CD4-positive, alpha-beta T cell (primary cell): ENCODE measurements at regions of chr19 and their contacts with region 1.

Region 1: GRCh38 chr19:29941828-29942403 is at the start of gene URI1:
- DNase-seq: peak; percentile 81 to 98 (median 93)
- ATAC-seq: peak; percentile 89
- H3K4me3 ChIP-seq: peak within 1 kb of the TSS; percentile 82
- H3K4me3 Mint-ChIP-seq: peak within 1 kb of the TSS; percentile 98
- H3K27ac ChIP-seq: peak within 1 kb of the TSS; percentile 12 to 67
- H3K27ac Mint-ChIP-seq: peak within 1 kb of the TSS; percentile 96
- H3K4me1 ChIP-seq: peaks cover 27% of the 10 kb centered on the region
- H3K4me1 Mint-ChIP-seq: peaks cover 53% of the 10 kb centered on the region
- H3K27me3 ChIP-seq: no peaks in the 10 kb centered on the region
- H3K27me3 Mint-ChIP-seq: no peaks in the 10 kb centered on the region
- CTCF ChIP-seq: no peak
- total RNA-seq, gene URI1: 50.9 to 63.6 TPM

Region 2: GRCh38 chr19:29212648-29213573 is 729.0 kb before region 1 on chr19 and contains the start of gene UQCRFS1:
- CTCF ChIA-PET with region 1: no interaction called
- POLR2A ChIA-PET with region 1: no interaction called
- intact Hi-C with region 1: loop called (anchors 5 to 10 kb)
- DNase-seq: peak; percentile 91 to 97 (median 94)
- ATAC-seq: peak; percentile 96
- H3K4me3 ChIP-seq: peak within 1 kb of the TSS; percentile 74
- H3K4me3 Mint-ChIP-seq: peak within 1 kb of the TSS; percentile 99
- H3K27ac ChIP-seq: peak within 1 kb of the TSS; percentile 67 to 78
- H3K27ac Mint-ChIP-seq: peak within 1 kb of the TSS; percentile 96
- H3K4me1 ChIP-seq: peaks cover 10% of the 10 kb centered on the region
- H3K4me1 Mint-ChIP-seq: peaks cover 54% of the 10 kb centered on the region
- H3K27me3 ChIP-seq: no peaks in the 10 kb centered on the region
- H3K27me3 Mint-ChIP-seq: peaks cover 14% of the 10 kb centered on the region
- CTCF ChIP-seq: no peak
- total RNA-seq, gene UQCRFS1: 30.5 TPM

Region 3: DNA sequence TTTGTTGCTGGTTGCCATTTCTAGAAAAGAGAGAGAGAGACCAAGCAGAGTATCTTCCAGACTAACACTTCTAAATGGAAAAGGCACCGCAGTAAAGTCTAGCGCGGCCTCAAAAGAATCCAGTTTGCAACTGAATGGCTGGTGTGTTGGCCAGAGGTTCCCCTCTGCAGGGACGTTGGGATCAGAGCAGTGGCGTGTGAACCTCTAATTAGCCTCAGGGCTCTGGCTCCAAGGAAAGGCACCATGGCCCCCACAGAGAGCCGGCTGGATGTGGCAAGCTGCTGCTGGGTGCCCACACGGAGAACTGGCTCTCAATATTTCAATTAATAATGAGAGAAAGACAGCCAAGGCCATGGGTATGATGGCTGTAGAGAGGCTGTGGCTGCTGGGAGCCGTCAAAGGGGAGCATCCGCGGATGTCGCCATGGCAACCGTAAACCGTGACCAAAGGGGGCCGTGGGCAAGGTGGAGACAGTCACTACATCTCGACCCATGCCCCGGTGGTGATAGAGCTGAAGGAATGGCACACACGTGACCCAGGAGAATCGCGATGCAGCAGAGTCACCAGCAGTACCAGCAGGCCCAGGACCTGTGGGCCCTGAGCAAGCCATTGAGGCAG is 406.6 kb before region 1 on chr19:
- CTCF ChIA-PET with region 1: no interaction called
- POLR2A ChIA-PET with region 1: no interaction called
- intact Hi-C with region 1: no loop called
- DNase-seq: no peak
- ATAC-seq: no peak
- H3K4me3 ChIP-seq: no peak overlapping the region
- H3K4me3 Mint-ChIP-seq: no peak overlapping the region
- H3K27ac ChIP-seq: no peak overlapping the region
- H3K27ac Mint-ChIP-seq: no peak overlapping the region
- H3K4me1 ChIP-seq: no peaks in the 10 kb centered on the region
- H3K4me1 Mint-ChIP-seq: no peaks in the 10 kb centered on the region
- H3K27me3 ChIP-seq: peaks cover 28 to 33% of the 10 kb centered on the region in 2 experiments
- H3K27me3 Mint-ChIP-seq: peaks cover 67% of the 10 kb centered on the region
- CTCF ChIP-seq: no peak

Region 4: GRCh38 chr19:29671393-29672160 is 270.3 kb before region 1 on chr19:
- CTCF ChIA-PET with region 1: no interaction called
- POLR2A ChIA-PET with region 1: interaction called, 12 read pairs
- intact Hi-C with region 1: no loop called
- DNase-seq: peak; percentile 73 to 94 (median 89)
- ATAC-seq: peak; percentile 63
- H3K4me3 ChIP-seq: peak overlapping the region; percentile 30
- H3K4me3 Mint-ChIP-seq: peak overlapping the region; percentile 68
- H3K27ac ChIP-seq: peak overlapping the region; percentile 78 to 86
- H3K27ac Mint-ChIP-seq: peak overlapping the region; percentile 98
- H3K4me1 ChIP-seq: peaks cover 98% of the 10 kb centered on the region
- H3K4me1 Mint-ChIP-seq: peaks cover 88% of the 10 kb centered on the region
- H3K27me3 ChIP-seq: no peaks in the 10 kb centered on the region
- H3K27me3 Mint-ChIP-seq: no peaks in the 10 kb centered on the region
- CTCF ChIP-seq: peak; percentile 56

Region 5: GRCh38 chr19:29811125-29812079 is 130.5 kb before region 1 on chr19 and contains the start of gene CCNE1:
- CTCF ChIA-PET with region 1: no interaction called
- POLR2A ChIA-PET with region 1: no interaction called
- intact Hi-C with region 1: loop called in 1 of 2 experiments (anchors 2 kb)
- DNase-seq: peak; percentile 88 to 100 (median 94)
- ATAC-seq: peak; percentile 90
- H3K4me3 ChIP-seq: peak within 1 kb of the TSS; percentile 58
- H3K4me3 Mint-ChIP-seq: peak within 1 kb of the TSS; percentile 96
- H3K27ac ChIP-seq: peak within 1 kb of the TSS; percentile 50 to 55
- H3K27ac Mint-ChIP-seq: peak within 1 kb of the TSS; percentile 82
- H3K4me1 ChIP-seq: peaks cover 14% of the 10 kb centered on the region
- H3K4me1 Mint-ChIP-seq: peaks cover 11% of the 10 kb centered on the region
- H3K27me3 ChIP-seq: no peaks in the 10 kb centered on the region
- H3K27me3 Mint-ChIP-seq: no peaks in the 10 kb centered on the region
- CTCF ChIP-seq: no peak
- total RNA-seq, gene CCNE1: 4.9 to 5.6 TPM

Region 6: DNA sequence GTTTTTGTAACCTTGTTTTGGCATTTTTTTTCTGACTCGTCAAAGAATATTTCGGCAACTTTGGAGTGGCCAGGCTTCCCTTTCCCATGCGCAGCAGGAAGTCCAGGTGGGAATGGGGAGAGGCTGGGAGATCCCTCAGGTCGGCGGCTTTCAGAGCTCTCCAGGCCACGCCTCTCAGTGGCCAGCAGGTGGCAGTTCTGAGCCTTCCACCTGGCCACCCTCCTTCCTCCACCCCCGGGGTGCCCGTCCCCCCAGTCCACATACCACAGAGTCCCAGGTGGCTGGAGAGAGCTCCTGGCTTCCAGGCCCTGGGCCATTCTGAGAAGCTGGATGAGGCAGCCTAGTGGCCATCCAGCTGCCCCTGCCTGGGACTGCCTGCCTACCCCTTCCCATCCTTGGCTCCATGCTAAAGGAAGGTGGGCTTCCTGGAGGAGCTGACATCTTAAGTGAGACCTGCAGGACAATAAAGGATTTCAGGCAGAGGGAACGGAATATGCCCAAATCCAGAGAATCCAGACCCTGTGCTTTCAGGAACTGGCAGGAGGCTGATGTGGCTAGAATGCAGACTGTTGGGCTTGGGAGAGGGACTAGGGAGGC is 83.8 kb before region 1 on chr19:
- CTCF ChIA-PET with region 1: no interaction called
- POLR2A ChIA-PET with region 1: no interaction called
- intact Hi-C with region 1: no loop called
- DNase-seq: peak in 10 of 14 experiments; percentile 10 to 68 (median 35)
- ATAC-seq: peak; percentile 73
- H3K4me3 ChIP-seq: no peak overlapping the region
- H3K4me3 Mint-ChIP-seq: no peak overlapping the region
- H3K27ac ChIP-seq: no peak overlapping the region
- H3K27ac Mint-ChIP-seq: no peak overlapping the region
- H3K4me1 ChIP-seq: peaks cover 4% of the 10 kb centered on the region
- H3K4me1 Mint-ChIP-seq: peaks cover 4% of the 10 kb centered on the region
- H3K27me3 ChIP-seq: peaks cover 3 to 10% of the 10 kb centered on the region in 2 experiments
- H3K27me3 Mint-ChIP-seq: peaks cover 20% of the 10 kb centered on the region
- CTCF ChIP-seq: peak; percentile 66

Region 7: DNA sequence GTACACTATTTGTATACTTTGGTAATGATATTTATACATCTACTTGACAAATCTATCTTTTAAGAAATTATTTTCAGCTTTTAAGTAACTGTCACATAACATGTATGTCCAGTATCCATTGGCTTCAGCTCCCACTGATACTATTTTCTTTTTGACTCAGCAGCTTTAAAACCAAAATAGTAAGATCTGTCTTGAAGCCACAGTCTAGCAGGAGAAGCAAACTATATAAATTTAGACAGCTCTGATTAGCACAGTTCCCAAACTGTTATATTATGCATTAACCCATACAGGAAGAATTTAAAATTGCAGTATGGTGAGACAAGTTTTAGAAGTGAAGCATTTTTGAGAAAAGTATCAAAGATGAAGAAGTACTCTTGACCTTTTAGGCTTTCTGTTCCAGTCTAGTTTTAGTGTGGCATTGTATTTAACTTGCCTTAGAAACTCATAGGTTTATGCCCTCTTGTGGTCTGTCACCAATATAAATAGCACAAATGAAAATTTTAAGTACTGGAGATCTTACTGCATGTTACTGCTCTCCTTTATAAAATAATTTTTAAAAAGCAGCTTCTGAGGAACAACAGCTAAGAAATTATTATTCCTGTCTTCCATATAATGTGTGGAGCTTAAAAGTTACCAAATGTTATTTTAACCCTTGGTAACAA is 24.8 kb after region 1 on chr19:
- CTCF ChIA-PET with region 1: interaction called, 3 read pairs
- POLR2A ChIA-PET with region 1: interaction called, 10 read pairs
- intact Hi-C with region 1: loop called in 1 of 2 experiments (anchors 2 kb)
- DNase-seq: peak in 3 of 14 experiments; percentile 18 to 23 (median 19)
- ATAC-seq: peak; percentile 37
- H3K4me3 ChIP-seq: no peak overlapping the region
- H3K4me3 Mint-ChIP-seq: peak overlapping the region; percentile 17
- H3K27ac ChIP-seq: no peak overlapping the region
- H3K27ac Mint-ChIP-seq: peak overlapping the region; percentile 12
- H3K4me1 ChIP-seq: peaks cover 20% of the 10 kb centered on the region
- H3K4me1 Mint-ChIP-seq: peaks cover 87% of the 10 kb centered on the region
- H3K27me3 ChIP-seq: no peaks in the 10 kb centered on the region
- H3K27me3 Mint-ChIP-seq: no peaks in the 10 kb centered on the region
- CTCF ChIP-seq: peak; percentile 14

Region 8: GRCh38 chr19:30163363-30164062 is 221.6 kb after region 1 on chr19:
- CTCF ChIA-PET with region 1: no interaction called
- POLR2A ChIA-PET with region 1: no interaction called
- intact Hi-C with region 1: no loop called
- DNase-seq: no peak
- ATAC-seq: no peak
- H3K4me3 ChIP-seq: no peak overlapping the region
- H3K4me3 Mint-ChIP-seq: no peak overlapping the region
- H3K27ac ChIP-seq: no peak overlapping the region
- H3K27ac Mint-ChIP-seq: no peak overlapping the region
- H3K4me1 ChIP-seq: no peaks in the 10 kb centered on the region
- H3K4me1 Mint-ChIP-seq: no peaks in the 10 kb centered on the region
- H3K27me3 ChIP-seq: no peaks in the 10 kb centered on the region
- H3K27me3 Mint-ChIP-seq: peaks cover 6% of the 10 kb centered on the region
- CTCF ChIP-seq: no peak